Activated CD8-positive, alpha-beta T cell treated with anti-CD3 and anti-CD28 coated beads for 36 hours (primary cell): ENCODE measurements at regions of chr9 and their contacts with region 1.

Region 1: GRCh38 chr9:99140685-99141314 is 35.9 kb downstream of the TGFBR1 start:
- DNase-seq: peak; percentile 52
- ATAC-seq: peak; percentile 87
- H3K4me3 Mint-ChIP-seq: no peak overlapping the region
- H3K27ac Mint-ChIP-seq: peak overlapping the region; percentile 14
- H3K4me1 Mint-ChIP-seq: peaks cover 37% of the 10 kb centered on the region
- H3K27me3 Mint-ChIP-seq: no peaks in the 10 kb centered on the region
- CTCF ChIP-seq: peak; percentile 75

Region 2: GRCh38 chr9:98848450-98849149 is 292.2 kb before region 1 on chr9:
- CTCF ChIA-PET with region 1: interaction called, 74 read pairs
- POLR2A ChIA-PET with region 1: no interaction called
- intact Hi-C with region 1: loop called (anchors 5 kb)
- DNase-seq: peak; percentile 87
- ATAC-seq: peak; percentile 95
- H3K4me3 Mint-ChIP-seq: no peak overlapping the region
- H3K27ac Mint-ChIP-seq: no peak overlapping the region
- H3K4me1 Mint-ChIP-seq: peaks cover 11% of the 10 kb centered on the region
- H3K27me3 Mint-ChIP-seq: no peaks in the 10 kb centered on the region
- CTCF ChIP-seq: peak; percentile 95

Region 3: DNA sequence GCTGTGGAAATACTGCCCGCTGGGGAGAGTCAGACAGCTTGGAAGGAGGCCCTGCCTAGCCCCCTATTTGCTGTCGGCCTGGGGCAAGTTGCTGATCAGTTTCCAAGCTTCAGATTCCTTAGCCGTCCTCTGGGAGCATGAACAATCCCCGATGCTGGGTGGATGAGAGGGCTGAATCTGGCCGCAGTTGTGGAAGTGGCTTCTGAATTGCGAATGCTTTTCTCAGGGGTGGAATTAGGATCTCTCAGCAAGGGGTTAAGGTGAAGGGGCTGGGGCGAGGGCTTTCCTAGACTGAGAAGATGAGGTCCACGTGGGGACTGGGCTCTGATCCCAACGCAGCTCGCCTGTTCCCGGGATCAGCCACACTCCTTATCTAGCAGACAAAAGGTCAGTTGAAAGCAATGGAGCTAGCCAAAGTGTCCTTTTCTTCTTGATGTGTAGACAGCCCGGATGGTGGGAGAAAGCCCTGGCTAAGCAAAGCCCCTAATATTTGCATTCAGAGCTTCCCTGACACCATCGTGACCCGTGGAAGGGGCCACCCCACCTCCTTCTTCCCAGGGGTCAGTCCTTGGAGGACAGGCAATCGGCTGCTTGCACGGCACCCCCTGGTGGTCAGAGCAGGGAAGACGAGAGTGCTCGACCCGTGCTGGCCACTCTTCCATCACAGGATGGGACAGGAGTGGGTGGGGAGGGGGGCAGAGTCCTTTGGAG is 142.2 kb before region 1 on chr9:
- CTCF ChIA-PET with region 1: interaction called, 258 read pairs
- POLR2A ChIA-PET with region 1: interaction called, 5 read pairs
- intact Hi-C with region 1: loop called (anchors 1 kb)
- DNase-seq: peak; percentile 76
- ATAC-seq: peak; percentile 74
- H3K4me3 Mint-ChIP-seq: no peak overlapping the region
- H3K27ac Mint-ChIP-seq: no peak overlapping the region
- H3K4me1 Mint-ChIP-seq: peaks cover 16% of the 10 kb centered on the region
- H3K27me3 Mint-ChIP-seq: peaks cover 1% of the 10 kb centered on the region
- CTCF ChIP-seq: peak; percentile 94

Region 4: DNA sequence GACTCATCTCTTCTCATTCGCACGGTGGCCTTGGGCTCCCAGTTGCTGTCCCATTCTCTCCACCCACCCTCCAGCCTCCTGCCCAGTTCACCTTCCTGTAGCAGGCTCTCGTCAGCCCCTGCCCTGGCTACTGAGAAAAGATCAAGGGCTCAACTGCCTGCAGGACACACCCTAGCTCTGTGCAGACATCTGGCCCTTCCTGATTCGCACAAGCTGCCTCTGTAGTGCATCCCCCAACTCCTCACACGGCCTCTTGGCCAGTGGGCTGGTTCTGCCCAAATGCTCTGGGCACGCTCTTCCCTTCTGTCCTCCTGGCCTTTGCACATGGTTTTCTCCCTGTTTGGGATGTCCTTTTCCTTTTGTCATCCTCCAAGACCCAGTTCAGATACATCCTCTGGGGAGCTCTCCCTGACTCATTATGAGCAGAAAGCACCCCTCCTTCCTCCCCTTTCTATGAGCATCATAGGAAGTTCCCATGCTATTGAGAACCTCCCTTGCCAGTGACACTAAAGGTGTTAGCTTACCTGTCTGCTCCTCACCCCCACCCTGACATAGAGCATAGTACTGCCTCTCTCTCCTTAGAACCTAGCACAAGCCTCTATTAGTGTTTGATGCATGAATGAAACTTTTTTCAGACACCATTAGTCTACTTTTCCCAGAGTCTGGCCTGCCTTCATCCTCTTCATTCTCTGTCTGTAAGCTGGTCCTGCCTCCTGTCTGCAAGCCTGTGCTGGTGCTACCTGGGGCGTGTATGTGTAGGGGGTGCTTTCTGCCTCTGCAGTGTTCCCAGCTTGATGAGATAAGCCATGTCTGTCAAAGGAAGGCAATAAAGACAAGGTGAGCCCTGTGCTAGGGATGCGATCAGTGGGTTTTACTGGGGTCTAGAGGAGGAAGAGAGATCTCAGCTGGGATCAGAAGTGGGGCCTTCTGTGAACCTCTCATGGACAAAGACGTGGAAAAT is 114.2 kb before region 1 on chr9:
- CTCF ChIA-PET with region 1: interaction called, 15 read pairs
- POLR2A ChIA-PET with region 1: no interaction called
- intact Hi-C with region 1: no loop called
- DNase-seq: no peak
- ATAC-seq: peak; percentile 61
- H3K4me3 Mint-ChIP-seq: no peak overlapping the region
- H3K27ac Mint-ChIP-seq: no peak overlapping the region
- H3K4me1 Mint-ChIP-seq: peaks cover 20% of the 10 kb centered on the region
- H3K27me3 Mint-ChIP-seq: no peaks in the 10 kb centered on the region
- CTCF ChIP-seq: no peak

Region 5: GRCh38 chr9:99057665-99058625 is 82.9 kb before region 1 on chr9:
- CTCF ChIA-PET with region 1: interaction called, 12 read pairs
- POLR2A ChIA-PET with region 1: interaction called, 3 read pairs
- intact Hi-C with region 1: no loop called
- DNase-seq: peak; percentile 94
- ATAC-seq: peak; percentile 43
- H3K4me3 Mint-ChIP-seq: peak overlapping the region; percentile 63
- H3K27ac Mint-ChIP-seq: peak overlapping the region; percentile 86
- H3K4me1 Mint-ChIP-seq: peaks cover 63% of the 10 kb centered on the region
- H3K27me3 Mint-ChIP-seq: peaks cover 4% of the 10 kb centered on the region
- CTCF ChIP-seq: no peak

Region 6: DNA sequence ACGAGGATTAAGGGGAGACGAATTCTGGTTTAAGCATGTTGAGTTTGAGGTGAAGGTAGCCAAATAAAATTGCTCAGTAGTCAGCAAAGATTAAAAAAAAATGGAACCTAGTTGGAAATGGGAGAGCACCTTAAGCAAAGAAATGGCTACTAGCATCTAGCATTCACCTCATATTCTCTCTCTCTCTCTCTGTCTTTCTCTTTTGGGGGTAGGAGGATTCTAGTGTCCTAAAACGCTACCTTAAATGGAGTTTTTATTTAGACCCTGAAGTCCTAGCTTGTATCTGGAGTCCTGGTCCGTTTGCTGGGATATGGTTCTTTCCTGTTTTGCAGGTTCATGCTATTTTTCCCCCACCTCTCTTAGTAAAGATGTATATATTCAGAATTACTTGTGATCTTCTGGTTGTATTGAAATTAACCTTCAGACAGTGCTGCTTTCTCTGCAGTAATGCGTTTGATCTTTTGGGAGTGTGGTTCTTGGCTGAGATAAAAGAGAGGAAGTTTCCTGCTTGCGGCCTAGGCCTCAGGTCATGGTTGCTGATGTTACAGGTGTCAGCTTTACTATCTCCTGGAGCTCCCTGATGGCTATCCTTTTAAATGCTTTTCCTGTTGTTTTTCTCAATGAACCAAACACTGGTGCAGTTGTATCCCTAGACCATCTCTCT is 27.9 kb before region 1 on chr9:
- CTCF ChIA-PET with region 1: interaction called, 13 read pairs
- POLR2A ChIA-PET with region 1: no interaction called
- intact Hi-C with region 1: no loop called
- DNase-seq: peak; percentile 65
- ATAC-seq: peak; percentile 87
- H3K4me3 Mint-ChIP-seq: peak overlapping the region; percentile 35
- H3K27ac Mint-ChIP-seq: peak overlapping the region; percentile 47
- H3K4me1 Mint-ChIP-seq: peaks cover 91% of the 10 kb centered on the region
- H3K27me3 Mint-ChIP-seq: no peaks in the 10 kb centered on the region
- CTCF ChIP-seq: no peak

Region 7: GRCh38 chr9:99162759-99163364 is 22.1 kb after region 1 on chr9:
- CTCF ChIA-PET with region 1: interaction called, 22 read pairs
- POLR2A ChIA-PET with region 1: no interaction called
- intact Hi-C with region 1: no loop called
- DNase-seq: peak; percentile 25
- ATAC-seq: peak; percentile 41
- H3K4me3 Mint-ChIP-seq: no peak overlapping the region
- H3K27ac Mint-ChIP-seq: no peak overlapping the region
- H3K4me1 Mint-ChIP-seq: peaks cover 42% of the 10 kb centered on the region
- H3K27me3 Mint-ChIP-seq: peaks cover 1% of the 10 kb centered on the region
- CTCF ChIP-seq: peak; percentile 88

Region 8: DNA sequence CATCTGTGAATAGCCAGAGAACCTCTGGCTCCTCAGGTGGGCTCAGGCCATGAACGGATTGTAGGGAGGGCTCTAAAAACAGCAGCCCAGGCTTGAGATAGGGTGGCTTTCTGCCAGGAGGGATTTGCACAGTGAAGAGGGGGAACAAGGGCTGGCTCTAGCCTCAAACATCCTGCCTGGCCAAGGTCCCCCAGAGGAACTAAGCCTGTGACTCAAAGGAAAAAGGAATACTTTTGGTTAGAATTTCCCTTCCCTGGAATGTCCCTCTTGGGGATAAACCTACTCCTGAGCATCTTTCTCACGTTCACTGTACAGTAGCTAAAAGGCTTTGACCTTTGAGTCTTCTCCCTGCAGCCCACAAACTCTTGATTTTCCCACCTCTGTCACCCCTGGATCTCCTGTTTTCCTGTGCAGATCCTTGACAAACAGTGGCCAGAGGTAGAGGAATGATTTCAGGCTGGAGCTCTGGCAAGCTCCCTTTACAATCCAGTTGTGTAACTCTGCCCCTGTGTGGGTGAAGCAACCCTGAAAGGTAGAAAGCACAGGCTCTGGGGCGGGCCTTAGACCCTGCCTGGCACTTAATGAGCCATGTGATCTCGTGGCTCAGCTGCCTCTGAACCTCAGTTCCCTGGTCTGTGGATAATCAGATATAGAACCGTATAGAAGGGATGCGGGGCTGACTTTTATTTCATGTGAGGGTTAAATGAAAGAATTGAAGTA is 98.7 kb after region 1 on chr9:
- CTCF ChIA-PET with region 1: no interaction called
- POLR2A ChIA-PET with region 1: no interaction called
- intact Hi-C with region 1: no loop called
- DNase-seq: no peak
- ATAC-seq: no peak
- H3K4me3 Mint-ChIP-seq: no peak overlapping the region
- H3K27ac Mint-ChIP-seq: no peak overlapping the region
- H3K4me1 Mint-ChIP-seq: peaks cover 26% of the 10 kb centered on the region
- H3K27me3 Mint-ChIP-seq: no peaks in the 10 kb centered on the region
- CTCF ChIP-seq: no peak

Region 9: DNA sequence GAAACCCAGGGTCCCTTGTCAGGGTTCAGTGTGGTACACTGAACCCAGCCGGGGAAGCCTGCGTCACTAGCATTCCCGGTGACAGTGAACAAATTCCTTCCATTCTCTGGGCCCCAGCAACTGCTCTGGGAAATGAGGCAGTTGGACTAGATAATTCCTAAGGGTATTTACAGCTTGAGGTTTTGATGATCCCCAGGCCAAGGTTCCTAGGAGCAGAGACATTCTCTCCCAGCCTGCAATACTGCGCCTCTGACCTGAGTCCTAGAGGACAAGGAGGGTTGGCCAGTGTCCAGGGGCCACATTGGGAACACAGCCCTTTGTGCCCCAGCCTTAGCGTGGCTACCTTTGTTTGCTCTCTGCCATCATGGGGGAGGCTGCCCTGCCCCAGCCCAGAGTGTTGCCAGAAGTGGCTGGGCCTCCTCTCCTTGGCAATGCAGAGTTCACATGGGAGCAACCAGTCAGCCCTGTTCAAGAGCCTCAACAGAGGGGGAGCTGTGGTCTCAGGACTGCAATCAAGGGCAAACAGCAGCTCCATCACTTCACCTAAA is 259.5 kb after region 1 on chr9:
- CTCF ChIA-PET with region 1: no interaction called
- POLR2A ChIA-PET with region 1: no interaction called
- intact Hi-C with region 1: no loop called
- DNase-seq: no peak
- ATAC-seq: no peak
- H3K4me3 Mint-ChIP-seq: no peak overlapping the region
- H3K27ac Mint-ChIP-seq: no peak overlapping the region
- H3K4me1 Mint-ChIP-seq: no peaks in the 10 kb centered on the region
- H3K27me3 Mint-ChIP-seq: peaks cover 6% of the 10 kb centered on the region
- CTCF ChIP-seq: no peak